ENCODE measurements at regions of chr10 and their contacts with region 1.

Region 1: GRCh38 chr10:103859161-103860086 is 4.0 kb upstream of the SH3PXD2A start:
- DNase-seq: no peak
- ATAC-seq: peak; percentile 72
- H3K4me3 ChIP-seq: no peak overlapping the region
- H3K27ac ChIP-seq: no peak overlapping the region
- H3K4me1 ChIP-seq: peaks cover 5% of the 10 kb centered on the region
- H3K27me3 ChIP-seq: no peaks in the 10 kb centered on the region
- CTCF ChIP-seq: peak; percentile 78

Region 2: DNA sequence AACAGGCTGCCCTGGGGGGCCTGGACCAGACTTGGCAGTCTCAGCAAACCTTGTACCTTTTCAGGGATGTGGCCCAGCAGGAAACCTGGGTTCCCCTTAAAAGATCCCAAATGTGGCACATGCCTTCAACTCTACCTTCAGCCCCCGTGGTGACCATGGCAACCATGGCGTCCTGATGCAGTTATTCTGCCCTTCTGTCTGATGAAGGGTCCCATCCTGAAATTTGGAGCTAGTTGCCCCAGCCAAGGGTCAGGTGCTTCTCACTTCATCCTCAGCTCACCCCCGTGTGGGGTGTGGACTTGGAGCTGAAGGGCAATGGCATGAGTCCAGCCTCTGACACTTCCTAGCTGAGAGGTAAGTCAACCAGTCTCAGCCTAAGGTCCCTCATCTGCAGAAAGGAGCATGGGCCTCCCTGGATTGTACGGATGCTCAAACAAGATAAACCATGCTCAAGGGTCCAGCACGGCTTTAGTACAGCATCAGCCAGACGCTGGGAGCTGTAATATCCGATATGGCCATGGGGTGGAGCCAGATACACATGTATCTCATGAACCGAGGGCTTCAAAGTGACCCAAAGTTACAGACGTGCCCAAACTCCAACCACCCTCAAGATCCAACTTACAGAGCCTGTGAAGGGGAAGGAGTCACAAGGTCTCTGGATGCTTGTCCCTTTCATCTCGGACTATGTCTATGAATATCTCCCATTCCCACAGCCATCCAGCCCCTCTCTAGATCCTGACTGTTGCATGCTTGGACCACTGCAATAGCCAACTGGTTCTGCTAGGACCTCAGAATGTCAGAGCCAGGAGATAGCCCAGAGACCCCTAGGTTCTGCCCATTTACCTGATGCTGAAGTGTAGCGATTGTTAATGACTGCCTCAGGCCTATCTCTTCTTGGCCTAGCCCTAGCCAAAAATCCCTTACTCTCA is 146.6 kb before region 1 on chr10:
- intact Hi-C with region 1: loop called (anchors 5 kb)
- DNase-seq: no peak
- ATAC-seq: peak; percentile 92
- H3K4me3 ChIP-seq: no peak overlapping the region
- H3K27ac ChIP-seq: no peak overlapping the region
- H3K4me1 ChIP-seq: no peaks in the 10 kb centered on the region
- H3K27me3 ChIP-seq: no peaks in the 10 kb centered on the region
- CTCF ChIP-seq: peak; percentile 93

Region 3: DNA sequence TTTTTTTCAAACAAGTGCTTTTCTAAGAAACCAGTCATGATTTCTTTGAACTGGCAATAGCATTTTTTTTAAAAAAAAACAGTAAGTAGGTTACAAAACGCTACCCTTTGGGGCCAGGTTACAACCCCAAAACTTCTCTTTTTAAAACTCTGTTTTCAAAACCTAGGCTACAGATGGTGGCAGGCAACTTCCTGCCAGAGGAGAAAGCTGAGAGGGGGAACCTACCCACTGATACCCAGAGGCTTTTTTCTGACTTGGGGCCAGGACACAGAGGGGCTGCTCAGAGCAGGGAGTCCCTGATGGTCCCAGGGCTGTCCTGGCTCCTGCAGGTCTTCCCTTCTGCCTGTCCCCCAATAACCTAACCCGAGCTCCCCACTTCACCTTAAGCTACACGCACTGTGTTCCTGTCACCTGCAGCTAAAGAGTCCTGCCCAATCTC is 51.6 kb after region 1 on chr10:
- intact Hi-C with region 1: no loop called
- DNase-seq: no peak
- ATAC-seq: peak; percentile 34
- H3K4me3 ChIP-seq: no peak overlapping the region
- H3K27ac ChIP-seq: peak overlapping the region; percentile 86
- H3K4me1 ChIP-seq: peaks cover 47% of the 10 kb centered on the region
- H3K27me3 ChIP-seq: no peaks in the 10 kb centered on the region
- CTCF ChIP-seq: no peak

Measured in upper lobe of right lung (tissue), 1 donor.